Adrenal gland (tissue), 19 donors: ENCODE measurements at regions of chr20 and their contacts with region 1.

Region 1: DNA sequence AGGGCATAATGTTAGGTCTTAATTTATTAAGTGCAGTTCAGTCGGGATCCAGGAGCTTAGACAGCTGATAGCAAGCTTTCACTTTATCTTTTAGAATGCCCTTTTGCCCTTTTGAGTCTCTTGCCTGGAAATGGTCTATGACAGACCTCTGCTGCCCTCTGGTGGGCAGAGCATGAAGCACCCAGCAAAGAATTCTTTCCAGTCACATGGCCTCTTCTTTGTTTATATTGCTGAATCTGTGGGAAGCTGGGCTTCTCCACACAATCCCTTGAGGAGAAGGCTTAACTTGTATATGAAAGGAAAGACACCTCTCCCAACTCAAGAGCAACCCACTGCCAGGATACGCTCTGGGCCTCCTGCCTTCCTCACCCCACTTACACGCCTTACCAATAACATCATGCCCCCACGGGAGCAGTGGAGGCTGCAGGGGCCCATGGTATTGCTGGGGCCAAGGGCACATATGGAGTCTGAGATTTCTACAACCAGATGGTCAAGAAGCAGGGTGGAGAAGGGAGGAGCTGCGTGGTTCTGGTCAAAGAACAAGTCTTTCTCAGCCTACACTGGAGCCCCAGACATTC is 20.4 kb downstream of the WFDC3 start:
- DNase-seq: peak; percentile 71 to 92 (median 79)
- H3K4me3 ChIP-seq: no peak overlapping the region
- H3K27ac ChIP-seq: no peak overlapping the region
- H3K4me1 ChIP-seq: peaks cover 0 to 3% of the 10 kb centered on the region in 2 donors
- H3K27me3 ChIP-seq: no peaks in the 10 kb centered on the region
- CTCF ChIP-seq: peak; percentile 93 to 97 (median 96)
- POLR2A ChIP-seq: no peak

Region 2: DNA sequence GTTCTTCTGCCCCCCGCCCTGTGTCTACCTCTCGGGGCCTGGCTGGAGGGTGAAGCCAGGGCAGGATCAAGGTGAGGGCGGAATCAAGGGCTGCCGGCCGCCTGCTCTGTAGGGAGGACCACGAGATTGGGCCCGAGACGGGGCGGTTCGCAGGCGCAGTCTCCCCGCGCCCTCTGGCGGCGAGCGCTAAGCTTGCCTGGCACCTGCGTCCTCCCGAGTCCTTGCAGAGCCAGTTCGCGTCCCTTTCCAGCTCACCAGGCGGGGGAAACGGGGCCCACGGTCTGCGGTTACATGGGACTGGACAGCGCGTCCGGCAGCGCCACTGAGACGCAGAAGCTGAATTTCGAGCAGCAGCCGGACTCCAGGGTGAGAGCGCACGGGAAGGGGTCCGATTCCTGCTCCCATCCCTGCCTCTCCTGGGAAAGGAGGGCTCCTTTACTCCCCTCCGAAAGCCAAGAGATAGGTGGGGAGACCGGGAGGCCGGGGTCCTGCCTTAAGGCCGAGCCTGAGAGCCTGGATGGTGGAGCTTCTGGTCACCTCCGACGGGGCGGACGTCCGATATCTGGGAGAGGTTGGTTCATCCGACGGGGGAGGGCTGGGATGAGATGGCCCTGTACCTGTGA is 459.6 kb before region 1 on chr20:
- intact Hi-C with region 1: loop called (anchors 5 to 10 kb)
- DNase-seq: peak in 5 of 7 donors; percentile 38 to 64 (median 47)
- H3K4me3 ChIP-seq: no peak overlapping the region
- H3K27ac ChIP-seq: no peak overlapping the region
- H3K4me1 ChIP-seq: no peaks in the 10 kb centered on the region
- H3K27me3 ChIP-seq: peaks cover 28% of the 10 kb centered on the region
- CTCF ChIP-seq: peak; percentile 49 to 67 (median 62)
- POLR2A ChIP-seq: no peak

Region 3: DNA sequence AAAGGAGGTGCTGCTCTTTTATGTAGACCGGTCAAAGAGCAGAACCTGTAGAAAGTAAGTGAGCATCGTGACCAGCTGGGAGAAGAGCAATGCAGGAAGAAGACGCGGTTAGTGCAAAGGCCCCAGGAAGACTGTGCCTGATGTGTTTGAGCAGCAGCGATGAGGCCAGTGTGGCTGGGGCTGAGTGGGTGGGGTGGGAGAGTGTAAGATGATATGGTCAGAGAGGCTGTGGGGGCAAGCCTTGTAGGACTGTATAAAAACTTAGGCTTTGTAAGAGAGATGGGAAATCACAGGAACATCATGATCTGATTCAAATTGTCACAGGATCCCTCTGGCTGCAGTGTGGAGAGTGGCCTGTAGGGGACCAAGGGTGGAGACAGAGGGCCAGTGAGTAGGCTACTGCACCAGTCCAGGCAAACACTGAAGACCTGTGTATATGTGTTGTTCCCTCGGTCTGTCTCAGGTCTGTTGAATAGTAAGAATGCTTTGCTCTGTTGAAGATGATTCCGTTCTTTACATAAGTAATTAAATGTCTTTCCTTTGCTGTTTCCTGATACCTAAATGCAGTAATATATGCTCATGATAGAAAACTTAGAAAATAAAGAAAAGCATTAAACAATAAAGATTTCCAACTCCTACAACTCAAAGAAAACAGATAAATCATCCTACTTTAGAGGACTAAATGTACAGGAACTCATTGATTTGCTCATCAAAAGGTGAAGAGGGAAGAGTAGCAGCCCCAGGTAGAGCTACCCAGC is 325.3 kb before region 1 on chr20:
- intact Hi-C with region 1: loop called in 1 of 2 experiments (anchors 10 kb)
- DNase-seq: no peak
- H3K4me3 ChIP-seq: no peak overlapping the region
- H3K27ac ChIP-seq: no peak overlapping the region
- H3K4me1 ChIP-seq: no peaks in the 10 kb centered on the region
- H3K27me3 ChIP-seq: no peaks in the 10 kb centered on the region
- CTCF ChIP-seq: peak; percentile 15 to 49 (median 26)
- POLR2A ChIP-seq: no peak

Region 4: GRCh38 chr20:45489083-45489531 is 282.2 kb before region 1 on chr20:
- intact Hi-C with region 1: no loop called
- DNase-seq: peak in 3 of 7 donors; percentile 12 to 35 (median 30)
- H3K4me3 ChIP-seq: no peak overlapping the region
- H3K27ac ChIP-seq: no peak overlapping the region
- H3K4me1 ChIP-seq: no peaks in the 10 kb centered on the region
- H3K27me3 ChIP-seq: no peaks in the 10 kb centered on the region
- CTCF ChIP-seq: no peak
- POLR2A ChIP-seq: no peak

Region 5: DNA sequence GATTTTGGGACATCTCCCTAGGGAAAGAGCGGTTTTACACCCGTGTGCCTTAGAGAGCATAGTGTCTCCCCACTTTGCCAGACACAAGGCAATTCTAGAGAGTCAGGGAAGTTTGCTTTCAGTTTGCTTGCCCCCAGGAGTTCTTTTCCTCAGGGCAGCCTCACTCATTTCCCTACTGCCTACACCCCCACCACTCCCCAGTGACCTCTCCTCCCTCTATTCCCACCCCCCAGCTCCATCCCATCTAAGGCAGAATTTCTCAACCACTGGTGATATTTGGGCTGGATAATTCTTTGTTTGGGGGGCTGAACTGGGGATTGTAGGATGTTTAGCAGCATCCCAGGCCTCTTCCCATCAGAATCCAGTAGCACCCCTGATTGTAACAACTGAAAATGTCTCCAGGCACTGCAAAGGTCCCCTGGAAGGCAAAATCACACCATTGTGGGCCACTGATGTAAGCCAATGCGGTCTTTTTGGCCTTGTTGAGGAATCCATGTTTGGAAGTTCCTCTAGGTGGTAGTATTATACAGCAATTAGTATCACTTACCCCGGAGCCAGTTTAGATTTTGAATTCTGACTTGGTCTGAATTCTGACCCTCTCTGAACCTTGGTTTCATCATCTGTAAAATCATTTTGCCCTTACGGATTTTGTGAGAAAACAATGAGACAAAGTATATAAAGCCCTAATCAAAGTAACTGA is 225.4 kb before region 1 on chr20:
- intact Hi-C with region 1: loop called (anchors 5 to 10 kb)
- DNase-seq: no peak
- H3K4me3 ChIP-seq: no peak overlapping the region
- H3K27ac ChIP-seq: no peak overlapping the region
- H3K4me1 ChIP-seq: no peaks in the 10 kb centered on the region
- H3K27me3 ChIP-seq: peaks cover 10% of the 10 kb centered on the region
- CTCF ChIP-seq: peak in 5 of 6 experiments; percentile 31 to 42 (median 37)
- POLR2A ChIP-seq: no peak

Region 6: DNA sequence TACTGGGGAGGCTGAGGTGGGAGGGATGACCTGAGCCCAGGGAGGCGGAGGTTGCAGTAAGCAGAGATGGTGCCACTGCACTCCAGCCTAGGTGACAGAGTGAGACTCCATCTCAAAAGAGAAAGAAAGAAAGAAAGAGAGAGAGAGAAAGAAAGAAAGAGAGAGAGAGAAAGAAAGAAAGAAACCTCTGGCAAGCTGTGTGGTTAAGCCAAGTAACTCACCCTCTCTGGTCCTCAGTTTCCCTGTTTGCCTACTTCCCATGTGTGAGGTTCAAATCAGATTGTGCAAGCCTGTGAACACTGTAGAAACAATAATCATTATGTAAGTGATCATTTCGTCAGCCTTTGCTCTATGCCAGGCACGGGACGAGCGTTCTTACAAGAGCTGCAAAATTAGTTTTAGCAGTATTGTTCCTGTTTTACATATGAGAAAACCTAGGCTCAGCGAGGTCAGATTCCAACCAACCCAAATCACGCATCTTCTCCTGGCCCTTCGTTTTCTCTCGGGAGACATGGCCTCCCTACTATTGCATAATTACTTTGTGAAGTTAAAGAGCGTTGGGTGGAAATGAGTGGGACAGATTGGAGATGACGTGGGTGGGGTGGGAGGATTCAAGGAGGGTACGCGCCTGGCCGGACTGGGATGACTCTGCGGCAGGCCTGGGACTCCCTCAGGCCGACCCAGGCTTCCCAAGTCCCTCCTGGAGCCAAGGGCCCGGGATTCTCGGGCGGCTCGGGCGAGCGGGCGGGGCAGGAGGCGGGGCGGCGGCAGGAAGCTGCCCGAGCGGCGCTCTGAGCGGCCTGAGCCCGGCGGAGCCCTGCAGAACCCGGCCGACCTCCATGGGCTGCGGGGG is 62.0 kb after region 1 on chr20 and contains the start of gene SNX21:
- intact Hi-C with region 1: no loop called
- DNase-seq: peak; percentile 84 to 94 (median 93)
- H3K4me3 ChIP-seq: peak within 1 kb of the TSS in 3 of 4 donors; percentile 48 to 79 (median 53)
- H3K27ac ChIP-seq: peak within 1 kb of the TSS; percentile 93 to 96 (median 95)
- H3K4me1 ChIP-seq: peaks cover 31 to 36% of the 10 kb centered on the region in 2 donors
- H3K27me3 ChIP-seq: no peaks in the 10 kb centered on the region
- CTCF ChIP-seq: no peak
- POLR2A ChIP-seq: peak; percentile 56 to 82
- total RNA-seq, gene SNX21: 61.6 to 183 (median 97.5) TPM

Region 7: GRCh38 chr20:46011631-46012482 is 240.6 kb after region 1 on chr20:
- intact Hi-C with region 1: no loop called
- DNase-seq: peak; percentile 40 to 84 (median 74)
- H3K4me3 ChIP-seq: no peak overlapping the region
- H3K27ac ChIP-seq: no peak overlapping the region
- H3K4me1 ChIP-seq: peaks cover 0 to 10% of the 10 kb centered on the region in 2 donors
- H3K27me3 ChIP-seq: peaks cover 38% of the 10 kb centered on the region
- CTCF ChIP-seq: peak in 3 of 6 experiments; percentile 22 to 33 (median 29)
- POLR2A ChIP-seq: no peak